PC-3 (cell line): ENCODE measurements at regions of chr3 and their contacts with region 1.

Region 1: GRCh38 chr3:24680214-24680967 is 185.7 kb upstream of the THRB start:
- DNase-seq: peak; percentile 77
- ATAC-seq: peak; percentile 29; the same call in 1 of the 2 replicates
- H3K4me3 ChIP-seq: no peak overlapping the region
- H3K27ac ChIP-seq: no peak overlapping the region
- H3K4me1 ChIP-seq: peaks cover 37% of the 10 kb centered on the region
- H3K27me3 ChIP-seq: no peaks in the 10 kb centered on the region
- CTCF ChIP-seq: peak; percentile 95

Region 2: GRCh38 chr3:23984934-23985333 is 695.5 kb before region 1 on chr3:
- CTCF ChIA-PET with region 1: no interaction called
- POLR2A ChIA-PET with region 1: no interaction called
- intact Hi-C with region 1: no loop called
- DNase-seq: no peak
- ATAC-seq: no peak
- H3K4me3 ChIP-seq: no peak overlapping the region
- H3K27ac ChIP-seq: no peak overlapping the region
- H3K4me1 ChIP-seq: no peaks in the 10 kb centered on the region
- H3K27me3 ChIP-seq: no peaks in the 10 kb centered on the region
- CTCF ChIP-seq: no peak

Region 3: GRCh38 chr3:24069045-24069444 is 611.3 kb before region 1 on chr3:
- CTCF ChIA-PET with region 1: interaction called, 3 read pairs
- POLR2A ChIA-PET with region 1: no interaction called
- intact Hi-C with region 1: loop called (anchors 1 kb)
- DNase-seq: peak; percentile 42
- ATAC-seq: peak; percentile 48
- H3K4me3 ChIP-seq: no peak overlapping the region
- H3K27ac ChIP-seq: no peak overlapping the region
- H3K4me1 ChIP-seq: no peaks in the 10 kb centered on the region
- H3K27me3 ChIP-seq: no peaks in the 10 kb centered on the region
- CTCF ChIP-seq: peak; percentile 62

Region 4: GRCh38 chr3:24264748-24265158 is 415.6 kb before region 1 on chr3:
- CTCF ChIA-PET with region 1: interaction called, 5 read pairs
- POLR2A ChIA-PET with region 1: no interaction called
- intact Hi-C with region 1: loop called (anchors 2 kb)
- DNase-seq: peak; percentile 81
- ATAC-seq: peak; percentile 46; the same call in 1 of the 2 replicates
- H3K4me3 ChIP-seq: no peak overlapping the region
- H3K27ac ChIP-seq: no peak overlapping the region
- H3K4me1 ChIP-seq: peaks cover 3% of the 10 kb centered on the region; the same call in 1 of the 2 replicates
- H3K27me3 ChIP-seq: no peaks in the 10 kb centered on the region
- CTCF ChIP-seq: peak; percentile 91

Region 5: GRCh38 chr3:24351779-24352469 is 328.5 kb before region 1 on chr3:
- CTCF ChIA-PET with region 1: no interaction called
- POLR2A ChIA-PET with region 1: no interaction called
- intact Hi-C with region 1: no loop called
- DNase-seq: no peak
- ATAC-seq: no peak
- H3K4me3 ChIP-seq: no peak overlapping the region
- H3K27ac ChIP-seq: no peak overlapping the region
- H3K4me1 ChIP-seq: 0 out of 2 replicates have a peak, but pooled peaks cover 3% of the 10 kb centered on the region
- H3K27me3 ChIP-seq: no peaks in the 10 kb centered on the region
- CTCF ChIP-seq: no peak

Region 6: GRCh38 chr3:24494618-24495325 is 185.6 kb before region 1 on chr3 and contains the start of gene THRB:
- CTCF ChIA-PET with region 1: no interaction called
- POLR2A ChIA-PET with region 1: no interaction called
- intact Hi-C with region 1: loop called (anchors 1 kb)
- DNase-seq: peak; percentile 72
- ATAC-seq: peak; percentile 55
- H3K4me3 ChIP-seq: peak within 1 kb of the TSS; percentile 95
- H3K27ac ChIP-seq: peak within 1 kb of the TSS; percentile 73
- H3K4me1 ChIP-seq: peaks cover 54% of the 10 kb centered on the region
- H3K27me3 ChIP-seq: no peaks in the 10 kb centered on the region
- CTCF ChIP-seq: no peak
- total RNA-seq, gene THRB: 7.0 and 9.7 TPM in 2 replicates

Region 7: DNA sequence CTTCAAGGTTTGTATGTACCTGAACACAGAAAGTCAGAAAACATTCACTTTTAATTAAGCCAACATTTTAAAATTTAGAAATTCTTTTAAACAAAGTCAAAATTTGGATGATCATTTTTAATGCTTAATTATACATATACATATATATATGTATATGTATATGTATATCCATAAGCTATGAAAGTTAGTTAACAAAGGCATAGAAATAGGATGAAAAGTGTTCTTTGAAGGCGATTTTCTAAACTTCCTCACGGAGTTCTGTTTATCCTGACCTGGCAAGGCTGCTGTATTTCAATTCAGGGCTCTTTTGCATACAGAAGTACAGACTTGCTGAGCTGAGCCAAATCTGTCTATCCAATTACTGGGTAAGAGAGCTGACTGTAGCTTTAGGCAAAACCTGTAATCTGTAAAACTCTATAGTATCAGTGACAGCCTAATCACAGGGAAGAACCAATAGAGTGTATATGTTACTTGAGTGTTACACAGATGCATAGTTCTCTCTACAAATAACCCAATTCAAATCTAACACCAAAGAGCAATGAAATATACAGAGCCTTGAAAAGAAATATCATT is 153.7 kb before region 1 on chr3:
- CTCF ChIA-PET with region 1: interaction called, 4 read pairs
- POLR2A ChIA-PET with region 1: no interaction called
- intact Hi-C with region 1: loop called (anchors 5 kb)
- DNase-seq: no peak
- ATAC-seq: no peak
- H3K4me3 ChIP-seq: no peak overlapping the region
- H3K27ac ChIP-seq: no peak overlapping the region
- H3K4me1 ChIP-seq: peaks cover 29% of the 10 kb centered on the region
- H3K27me3 ChIP-seq: no peaks in the 10 kb centered on the region
- CTCF ChIP-seq: no peak

Region 8: GRCh38 chr3:24646790-24647189 is 33.6 kb before region 1 on chr3:
- CTCF ChIA-PET with region 1: no interaction called
- POLR2A ChIA-PET with region 1: interaction called, 5 read pairs
- intact Hi-C with region 1: loop called (anchors 1 kb)
- DNase-seq: peak; percentile 68
- ATAC-seq: peak; percentile 92
- H3K4me3 ChIP-seq: no peak overlapping the region
- H3K27ac ChIP-seq: peak overlapping the region; percentile 11
- H3K4me1 ChIP-seq: peaks cover 15% of the 10 kb centered on the region
- H3K27me3 ChIP-seq: no peaks in the 10 kb centered on the region
- CTCF ChIP-seq: no peak

Region 9: DNA sequence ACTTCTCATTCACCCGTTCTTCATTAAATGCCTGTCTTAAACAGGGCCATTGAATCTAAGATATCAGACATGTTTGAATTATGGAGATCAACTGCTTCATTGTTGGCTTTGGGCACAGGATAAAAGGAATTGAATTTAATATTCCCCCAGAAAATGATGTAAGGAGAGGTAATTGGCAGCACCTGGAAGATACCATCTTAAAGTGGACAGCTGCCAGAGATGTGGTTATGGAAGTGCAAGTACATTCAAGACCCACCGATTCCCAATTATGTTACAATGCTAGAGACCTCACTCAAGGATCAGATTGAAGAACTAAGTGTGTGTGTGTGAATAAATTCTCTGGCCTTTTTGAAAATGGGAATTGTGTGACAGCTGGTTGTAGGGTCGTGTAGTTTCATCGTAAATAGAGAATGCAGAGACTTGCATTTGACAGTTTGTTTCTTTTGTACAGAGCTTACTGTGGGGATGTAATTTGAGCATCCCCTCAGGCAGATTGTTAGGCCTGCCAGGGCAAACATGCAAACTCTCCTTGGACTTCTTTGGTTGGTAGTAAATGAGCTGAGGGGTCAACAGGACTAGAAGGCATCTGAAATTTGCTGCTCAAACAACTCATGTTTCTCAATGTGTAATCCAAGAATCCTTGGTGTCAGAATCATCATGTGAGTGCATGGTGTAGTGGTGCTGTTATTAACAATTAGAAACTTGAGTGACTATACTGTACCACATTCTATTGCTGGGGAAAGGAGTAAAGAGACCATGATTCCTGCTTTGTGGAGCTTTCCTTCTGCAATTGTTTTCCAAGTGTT is 173.5 kb after region 1 on chr3:
- CTCF ChIA-PET with region 1: no interaction called
- POLR2A ChIA-PET with region 1: no interaction called
- intact Hi-C with region 1: no loop called
- DNase-seq: no peak
- ATAC-seq: no peak
- H3K4me3 ChIP-seq: no peak overlapping the region
- H3K27ac ChIP-seq: no peak overlapping the region
- H3K4me1 ChIP-seq: no peaks in the 10 kb centered on the region
- H3K27me3 ChIP-seq: peaks cover 48% of the 10 kb centered on the region
- CTCF ChIP-seq: no peak

Region 10: DNA sequence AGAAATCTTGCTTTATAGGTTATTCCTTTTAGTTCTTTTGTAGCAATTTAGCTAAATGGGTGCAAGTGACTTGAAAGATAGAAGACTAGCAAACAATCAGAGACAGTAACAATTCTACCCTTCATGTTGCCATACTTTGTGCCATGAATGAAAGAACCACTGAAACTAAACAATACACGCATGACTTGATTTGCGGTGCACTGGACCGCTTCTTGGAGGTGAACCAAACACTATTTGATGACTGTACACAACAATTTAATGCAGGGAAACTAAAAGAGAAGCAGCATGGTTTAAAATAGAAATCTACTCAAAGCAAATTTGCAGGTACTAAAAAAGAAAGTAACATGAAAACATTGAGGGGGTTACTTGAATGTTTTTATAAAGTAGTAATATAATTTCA is 416.6 kb after region 1 on chr3:
- CTCF ChIA-PET with region 1: no interaction called
- POLR2A ChIA-PET with region 1: no interaction called
- intact Hi-C with region 1: no loop called
- DNase-seq: no peak
- ATAC-seq: no peak
- H3K4me3 ChIP-seq: no peak overlapping the region
- H3K27ac ChIP-seq: no peak overlapping the region
- H3K4me1 ChIP-seq: no peaks in the 10 kb centered on the region
- H3K27me3 ChIP-seq: peaks cover 29% of the 10 kb centered on the region
- CTCF ChIP-seq: no peak